Activated CD4-positive, alpha-beta T cell treated with anti-CD3 and anti-CD28 coated beads, Interleukin-2, amount 10 ng/mL, durations not matched to agents 24 days and 14 days (primary cell): ENCODE measurements at regions of chr12 and their contacts with region 1.

Region 1: GRCh38 chr12:80763874-80764273 is 47.2 kb downstream of the MYF5 start:
- DNase-seq: no peak
- H3K4me3 Mint-ChIP-seq: no peak overlapping the region
- H3K27ac Mint-ChIP-seq: no peak overlapping the region
- H3K4me1 Mint-ChIP-seq: no peaks in the 10 kb centered on the region
- H3K27me3 Mint-ChIP-seq: no peaks in the 10 kb centered on the region

Region 2: DNA sequence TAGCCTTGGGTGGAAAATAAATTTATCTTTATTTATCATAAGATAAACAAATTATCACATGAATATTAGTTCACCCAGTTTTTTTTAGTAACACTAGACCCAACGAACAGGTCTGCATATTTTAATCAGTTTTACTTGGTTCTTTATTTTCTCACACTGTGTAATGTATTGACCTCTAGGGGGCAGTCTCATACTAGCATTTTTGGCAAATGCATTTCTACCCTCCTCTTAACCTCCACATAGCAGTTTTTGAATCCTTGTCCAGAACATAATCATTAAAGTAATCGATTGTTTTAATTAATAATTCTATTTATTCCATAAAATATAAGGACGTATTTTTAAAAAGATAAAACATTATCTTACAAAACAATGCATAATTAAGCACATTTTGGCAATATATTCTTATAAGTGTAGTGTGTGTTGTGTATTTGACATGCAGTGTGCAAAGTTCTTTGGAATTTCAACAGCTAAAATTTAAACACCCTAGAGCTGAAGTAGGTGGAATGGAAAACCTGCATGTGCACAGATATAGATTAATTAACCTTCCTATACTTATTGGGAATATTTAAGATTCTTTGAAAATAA is 351.4 kb before region 1 on chr12:
- intact Hi-C with region 1: loop called (anchors 2 kb)
- DNase-seq: peak; percentile 60
- H3K4me3 Mint-ChIP-seq: no peak overlapping the region
- H3K27ac Mint-ChIP-seq: no peak overlapping the region
- H3K4me1 Mint-ChIP-seq: no peaks in the 10 kb centered on the region
- H3K27me3 Mint-ChIP-seq: no peaks in the 10 kb centered on the region